IMR-90 (cell line): ENCODE measurements at regions of chr1 and their contacts with region 1.

Region 1: GRCh38 chr1:44587796-44588460 is 86.4 kb downstream of the TMEM53 start:
- DNase-seq: no peak
- ATAC-seq: no peak
- H3K4me3 ChIP-seq: no peak overlapping the region
- H3K27ac ChIP-seq: no peak overlapping the region
- H3K4me1 ChIP-seq: no peaks in the 10 kb centered on the region
- H3K27me3 ChIP-seq: peaks cover 50% of the 10 kb centered on the region
- CTCF ChIP-seq: no peak
- POLR2A ChIP-seq: no peak
- RAD21 ChIP-seq: no peak

Region 2: DNA sequence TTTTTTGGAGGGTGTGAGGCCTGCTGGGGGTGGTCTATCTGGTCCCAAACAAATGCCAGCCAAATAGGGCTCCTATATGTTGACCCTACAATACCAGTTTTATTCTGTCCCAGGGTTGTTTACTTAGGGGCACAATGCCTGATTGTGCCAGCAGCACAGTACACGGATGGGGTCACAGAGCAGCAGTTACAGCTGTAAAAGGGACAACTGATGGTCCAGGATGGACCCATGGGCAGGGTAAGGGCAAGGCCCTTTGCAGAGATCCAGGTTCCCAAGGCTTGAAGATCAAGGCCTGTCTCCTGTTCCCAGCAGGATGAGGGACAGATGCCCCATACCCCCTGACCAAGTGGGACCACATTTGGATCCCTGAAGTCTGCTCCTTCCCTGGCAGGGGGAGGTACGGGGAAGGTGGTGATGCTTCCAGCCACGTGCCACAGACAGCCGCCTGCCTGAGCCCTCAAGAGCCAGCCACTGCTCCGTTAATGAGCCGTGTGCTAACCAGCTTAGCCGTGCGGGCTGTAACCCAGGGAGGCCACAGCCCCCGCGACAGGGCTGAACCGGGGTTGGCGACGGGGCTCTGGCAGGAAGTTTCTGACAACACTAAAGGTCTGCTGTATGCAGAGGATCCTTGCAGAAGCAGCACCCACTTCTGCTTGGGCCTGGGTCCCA is 574.9 kb before region 1 on chr1:
- CTCF ChIA-PET with region 1: no interaction called
- POLR2A ChIA-PET with region 1: no interaction called
- dilution Hi-C with region 1: no loop called
- in situ Hi-C with region 1: loop called (anchors 10 kb)
- intact Hi-C with region 1: no loop called
- DNase-seq: no peak
- ATAC-seq: no peak
- H3K4me3 ChIP-seq: no peak overlapping the region
- H3K27ac ChIP-seq: no peak overlapping the region
- H3K4me1 ChIP-seq: no peaks in the 10 kb centered on the region
- H3K27me3 ChIP-seq: no peaks in the 10 kb centered on the region
- CTCF ChIP-seq: no peak
- POLR2A ChIP-seq: no peak
- RAD21 ChIP-seq: no peak

Region 3: GRCh38 chr1:44786138-44786840 is 198.4 kb after region 1 on chr1:
- CTCF ChIA-PET with region 1: no interaction called
- POLR2A ChIA-PET with region 1: no interaction called
- dilution Hi-C with region 1: no loop called
- in situ Hi-C with region 1: no loop called
- intact Hi-C with region 1: no loop called
- DNase-seq: peak; percentile 59
- ATAC-seq: peak; percentile 77
- H3K4me3 ChIP-seq: peak overlapping the region; percentile 36; the same call in 1 of the 2 replicates
- H3K27ac ChIP-seq: no peak overlapping the region
- H3K4me1 ChIP-seq: peaks cover 8% of the 10 kb centered on the region; the same call in 1 of the 2 replicates
- H3K27me3 ChIP-seq: peaks cover 2% of the 10 kb centered on the region; the same call in 1 of the 2 replicates
- CTCF ChIP-seq: peak; percentile 83
- POLR2A ChIP-seq: no peak
- RAD21 ChIP-seq: peak; percentile 83